ENCODE measurements at regions of chr12 and their contacts with region 1.

Region 1: GRCh38 chr12:9925708-9926393 is 6.3 kb downstream of the CLEC2A start:
- DNase-seq: peak in 8 of 9 donors; percentile 7 to 64 (median 50)
- ATAC-seq: peak; percentile 73
- H3K4me3 ChIP-seq: no peak overlapping the region
- H3K4me3 Mint-ChIP-seq: peak overlapping the region; percentile 30 to 85 (median 73)
- H3K27ac ChIP-seq: no peak overlapping the region
- H3K27ac Mint-ChIP-seq: peak overlapping the region in 6 of 9 donors; percentile 5 to 93 (median 44)
- H3K4me1 ChIP-seq: peaks cover 0 to 6% of the 10 kb centered on the region in 2 donors
- H3K4me1 Mint-ChIP-seq: peaks cover 0 to 26% (median 18%) of the 10 kb centered on the region in 7 donors
- H3K27me3 ChIP-seq: no peaks in the 10 kb centered on the region
- H3K27me3 Mint-ChIP-seq: peaks cover 0 to 23% (median 0%) of the 10 kb centered on the region in 5 donors

Region 2: GRCh38 chr12:9906873-9907272 is 19.0 kb before region 1 on chr12:
- CTCF ChIA-PET with region 1: interaction called, 4 read pairs
- POLR2A ChIA-PET with region 1: interaction called, 5 read pairs
- intact Hi-C with region 1: loop called in 1 of 2 experiments (anchors 2 kb)
- DNase-seq: peak in 8 of 9 donors; percentile 26 to 68 (median 47)
- ATAC-seq: peak; percentile 96
- H3K4me3 ChIP-seq: no peak overlapping the region
- H3K4me3 Mint-ChIP-seq: peak overlapping the region; percentile 48 to 77 (median 68)
- H3K27ac ChIP-seq: peak overlapping the region; percentile 51
- H3K27ac Mint-ChIP-seq: peak overlapping the region; percentile 74 to 98 (median 83)
- H3K4me1 ChIP-seq: peaks cover 9 to 20% of the 10 kb centered on the region in 2 donors
- H3K4me1 Mint-ChIP-seq: peaks cover 16 to 45% (median 36%) of the 10 kb centered on the region in 7 donors
- H3K27me3 ChIP-seq: no peaks in the 10 kb centered on the region
- H3K27me3 Mint-ChIP-seq: peaks cover 0 to under 1% (median 0%) of the 10 kb centered on the region in 5 donors

Region 3: DNA sequence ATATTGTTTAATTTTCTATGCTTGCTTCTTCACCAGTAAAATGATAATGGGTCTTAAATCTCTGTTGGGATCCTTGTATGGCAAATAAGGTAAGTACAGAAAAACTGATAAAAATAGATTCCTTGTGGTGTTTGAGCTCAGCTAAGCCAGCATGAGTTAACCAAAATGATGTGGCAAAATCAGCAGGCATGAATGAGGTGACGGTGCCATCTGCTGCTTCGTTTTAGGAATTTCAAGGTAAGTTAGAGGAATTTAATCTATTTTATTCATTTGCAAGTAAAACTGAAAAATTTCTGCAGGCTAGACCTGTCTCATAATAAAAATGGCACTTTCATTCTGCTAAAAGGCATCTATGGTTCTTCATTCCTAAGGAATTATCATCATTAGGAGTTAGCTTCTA is 214.2 kb after region 1 on chr12:
- CTCF ChIA-PET with region 1: no interaction called
- POLR2A ChIA-PET with region 1: no interaction called
- intact Hi-C with region 1: loop called in 1 of 2 experiments (anchors 1 kb)
- DNase-seq: peak in 7 of 9 donors; percentile 26 to 66 (median 49)
- ATAC-seq: peak; percentile 72
- H3K4me3 ChIP-seq: no peak overlapping the region
- H3K4me3 Mint-ChIP-seq: no peak overlapping the region
- H3K27ac ChIP-seq: no peak overlapping the region
- H3K27ac Mint-ChIP-seq: no peak overlapping the region
- H3K4me1 ChIP-seq: no peaks in the 10 kb centered on the region
- H3K4me1 Mint-ChIP-seq: peaks cover 0 to 3% (median 0%) of the 10 kb centered on the region in 7 donors
- H3K27me3 ChIP-seq: no peaks in the 10 kb centered on the region
- H3K27me3 Mint-ChIP-seq: peaks cover 0 to 51% (median 0%) of the 10 kb centered on the region in 5 donors

Measured in naive thymus-derived CD4-positive, alpha-beta T cell (primary cell).